ENCODE measurements at regions of chr11 and their contacts with region 1.

Region 1: DNA sequence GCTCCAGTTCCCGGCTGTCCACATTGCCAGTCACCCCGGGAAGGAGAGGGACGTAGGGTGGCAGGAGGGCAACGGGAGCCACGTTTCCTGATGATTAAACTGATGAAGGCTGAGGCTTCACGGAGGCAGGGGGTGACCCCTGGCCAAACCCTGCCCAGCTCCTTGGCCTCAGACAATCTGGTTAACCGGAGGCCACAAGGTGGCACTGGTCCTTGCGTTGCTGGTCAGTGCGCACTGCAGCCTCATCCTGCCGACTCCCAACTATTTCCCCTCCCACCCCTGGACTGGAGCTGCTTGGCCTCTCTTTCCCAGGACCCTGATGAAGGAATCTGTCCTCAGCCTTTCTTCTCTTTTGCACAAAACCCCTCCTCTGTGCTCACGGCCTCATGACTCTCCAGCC is 75.3 kb downstream of the PDE2A start:
- DNase-seq: peak; percentile 59 to 65
- ATAC-seq: peak; percentile 75 to 91
- H3K4me3 ChIP-seq: no peak overlapping the region
- H3K27ac ChIP-seq: no peak overlapping the region
- H3K4me1 ChIP-seq: peaks cover 13% of the 10 kb centered on the region
- CTCF ChIP-seq: peak; percentile 58
- EP300 ChIP-seq: no peak
- POLR2A ChIP-seq: no peak
- RAD21 ChIP-seq: peak; percentile 54 to 59; a peak in 4 of 5 replicates

Region 2: DNA sequence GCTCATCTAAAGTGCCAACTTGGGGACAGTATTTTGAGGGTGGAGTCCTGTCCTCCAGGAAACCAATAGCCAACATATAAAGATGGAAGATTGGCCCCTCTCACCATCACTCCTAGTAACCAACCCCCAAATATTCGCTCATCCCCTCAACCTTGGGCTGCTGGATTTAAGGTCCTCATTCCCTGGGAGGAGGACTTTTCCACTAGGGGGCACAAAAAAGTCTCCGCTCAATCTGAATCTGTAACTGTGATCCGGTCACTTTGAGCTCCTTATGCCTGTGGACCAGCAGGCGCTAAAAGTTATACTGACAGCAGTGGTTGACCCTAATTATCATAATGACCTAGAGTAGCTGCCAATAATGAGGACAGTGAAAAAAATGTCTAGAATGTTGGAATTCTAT is 144.1 kb before region 1 on chr11:
- CTCF ChIA-PET with region 1: no interaction called
- POLR2A ChIA-PET with region 1: no interaction called
- DNase-seq: no peak
- ATAC-seq: peak; percentile 67 to 76; a peak in 4 of 6 replicates
- H3K4me3 ChIP-seq: no peak overlapping the region
- H3K27ac ChIP-seq: no peak overlapping the region
- H3K4me1 ChIP-seq: no peaks in the 10 kb centered on the region
- CTCF ChIP-seq: peak; percentile 34
- EP300 ChIP-seq: no peak
- POLR2A ChIP-seq: no peak
- RAD21 ChIP-seq: peak in 1 of 2 experiments; percentile 14; a peak in 1 of 5 replicates

Region 3: GRCh38 chr11:72585762-72586311 is 13.1 kb before region 1 on chr11:
- CTCF ChIA-PET with region 1: interaction called, 211 read pairs
- POLR2A ChIA-PET with region 1: no interaction called
- DNase-seq: peak; percentile 64 to 77
- ATAC-seq: peak; percentile 27 to 75; a peak in 3 of 6 replicates
- H3K4me3 ChIP-seq: no peak overlapping the region
- H3K27ac ChIP-seq: no peak overlapping the region
- H3K4me1 ChIP-seq: 0 out of 3 replicates have a peak, but pooled peaks cover 6% of the 10 kb centered on the region
- CTCF ChIP-seq: peak; percentile 87
- EP300 ChIP-seq: no peak
- POLR2A ChIP-seq: no peak
- RAD21 ChIP-seq: peak; percentile 69 to 72

Region 4: GRCh38 chr11:72609045-72609444 is 10.1 kb after region 1 on chr11:
- CTCF ChIA-PET with region 1: interaction called, 93 read pairs
- POLR2A ChIA-PET with region 1: no interaction called
- DNase-seq: peak in 1 of 2 experiments; percentile 36
- ATAC-seq: peak in 1 of 2 experiments; percentile 61; a peak in 3 of 6 replicates
- H3K4me3 ChIP-seq: no peak overlapping the region
- H3K27ac ChIP-seq: no peak overlapping the region
- H3K4me1 ChIP-seq: no peaks in the 10 kb centered on the region
- CTCF ChIP-seq: peak; percentile 38; the same call in 2 of the 3 replicates
- EP300 ChIP-seq: no peak
- POLR2A ChIP-seq: no peak
- RAD21 ChIP-seq: no peak

Region 5: DNA sequence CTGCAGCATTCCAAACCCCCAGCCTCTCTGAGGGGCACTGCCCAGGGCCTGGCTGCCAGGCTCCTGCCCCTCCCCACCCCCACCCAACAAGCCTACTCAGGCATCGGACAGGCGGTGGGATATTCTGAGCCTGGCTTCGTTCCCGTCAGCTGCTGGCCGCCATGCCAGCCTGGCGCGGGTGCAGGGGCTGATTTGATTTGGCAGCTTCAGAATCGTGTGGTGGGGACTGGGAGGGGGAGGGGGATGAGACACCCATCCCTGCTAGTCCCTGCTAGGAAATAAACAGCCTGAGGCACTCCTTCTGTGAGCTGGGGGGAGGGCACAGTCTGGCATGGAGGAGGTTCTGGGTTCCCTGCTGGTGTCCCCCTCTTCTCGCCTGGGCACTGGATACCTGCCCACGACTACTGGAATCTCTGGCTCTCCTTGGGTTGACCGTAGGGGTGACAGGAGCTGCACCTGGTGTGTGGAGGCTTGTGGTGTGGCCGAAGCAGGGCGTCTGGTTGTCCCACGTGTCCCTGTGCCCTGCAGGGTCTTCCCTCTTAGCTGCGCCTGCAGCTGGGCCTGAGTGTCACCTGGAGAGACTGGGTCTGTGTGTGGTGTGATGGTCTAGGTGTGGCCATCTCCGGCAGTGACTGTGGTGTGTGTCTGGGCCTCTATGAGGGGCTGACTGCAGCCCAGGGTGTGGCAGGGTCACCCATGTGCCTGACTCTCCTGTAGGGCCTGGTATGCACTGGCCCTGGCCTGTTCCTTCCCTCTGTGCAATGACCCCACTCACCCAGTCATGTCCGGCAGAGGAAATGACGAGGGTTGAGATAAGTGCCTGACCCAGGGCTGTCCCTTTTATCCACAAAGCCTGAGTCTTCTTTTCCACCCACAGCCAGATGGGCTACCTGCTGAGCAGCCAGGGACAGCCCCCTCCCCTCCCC is 33.2 kb after region 1 on chr11:
- CTCF ChIA-PET with region 1: interaction called, 24 read pairs
- POLR2A ChIA-PET with region 1: no interaction called
- DNase-seq: no peak
- ATAC-seq: no peak
- H3K4me3 ChIP-seq: no peak overlapping the region
- H3K27ac ChIP-seq: no peak overlapping the region
- H3K4me1 ChIP-seq: peaks cover under 1% of the 10 kb centered on the region; the same call in 1 of the 3 replicates
- CTCF ChIP-seq: no peak
- EP300 ChIP-seq: no peak
- POLR2A ChIP-seq: no peak
- RAD21 ChIP-seq: no peak

Region 6: GRCh38 chr11:72642884-72643511 is 44.1 kb after region 1 on chr11:
- CTCF ChIA-PET with region 1: interaction called, 53 read pairs
- POLR2A ChIA-PET with region 1: interaction called, 5 read pairs
- DNase-seq: peak; percentile 65 to 80
- ATAC-seq: peak; percentile 59 to 86
- H3K4me3 ChIP-seq: peak overlapping the region; percentile 68
- H3K27ac ChIP-seq: peak overlapping the region; percentile 58 to 91
- H3K4me1 ChIP-seq: peaks cover 16% of the 10 kb centered on the region
- CTCF ChIP-seq: peak; percentile 96
- EP300 ChIP-seq: no peak
- POLR2A ChIP-seq: no peak
- RAD21 ChIP-seq: peak; percentile 64 to 88

Region 7: DNA sequence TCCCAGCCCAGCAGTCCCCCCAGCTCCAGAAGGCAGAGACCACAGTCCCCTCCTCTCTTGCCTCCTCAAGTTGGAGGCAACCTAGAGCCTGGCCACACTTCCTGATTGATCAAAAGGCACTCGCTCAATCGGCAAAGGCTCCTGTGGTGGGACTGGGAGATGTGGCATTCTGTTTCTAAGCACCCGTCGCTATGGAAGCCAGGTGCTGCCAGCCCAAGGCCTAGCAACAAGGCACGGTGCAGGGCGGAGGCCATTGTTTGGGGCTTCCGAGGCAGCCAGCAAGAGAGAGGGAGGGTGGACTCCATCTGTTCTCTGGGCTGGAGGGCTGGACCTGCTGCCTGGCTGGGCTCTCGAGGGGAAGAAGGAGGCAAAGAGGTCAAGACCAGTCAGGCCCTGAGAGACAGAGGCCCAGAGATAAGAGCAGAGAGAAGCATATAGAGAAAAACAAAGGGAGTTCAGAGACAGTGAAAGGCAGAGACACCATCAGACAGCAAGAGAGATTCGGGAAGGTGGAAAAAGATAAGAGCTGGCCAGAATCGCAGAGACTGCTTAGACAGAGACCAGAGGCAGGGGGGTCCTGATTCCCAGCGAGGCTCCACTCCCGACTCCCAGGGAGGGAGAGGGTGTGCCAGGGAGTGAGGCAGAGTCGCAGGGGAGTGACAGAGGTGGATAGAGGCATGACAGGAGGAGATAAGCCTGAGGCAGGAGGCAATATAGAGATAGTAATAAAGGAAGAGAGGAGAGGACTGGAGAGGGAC is 54.1 kb after region 1 on chr11:
- CTCF ChIA-PET with region 1: interaction called, 14 read pairs
- POLR2A ChIA-PET with region 1: no interaction called
- DNase-seq: no peak
- ATAC-seq: no peak
- H3K4me3 ChIP-seq: no peak overlapping the region
- H3K27ac ChIP-seq: no peak overlapping the region
- H3K4me1 ChIP-seq: no peaks in the 10 kb centered on the region
- CTCF ChIP-seq: no peak
- EP300 ChIP-seq: no peak
- POLR2A ChIP-seq: no peak
- RAD21 ChIP-seq: no peak